Right cardiac atrium (tissue), 5 donors: ENCODE measurements at regions of chr16 and their contacts with region 1.

Region 1: GRCh38 chr16:89167425-89167941 is 4.1 kb upstream of the CDH15 start:
- DNase-seq: peak; percentile 86 to 95 (median 95)
- ATAC-seq: peak; percentile 57 to 72
- H3K4me3 ChIP-seq: no peak overlapping the region
- H3K27ac ChIP-seq: no peak overlapping the region
- H3K4me1 ChIP-seq: no peaks in the 10 kb centered on the region
- H3K27me3 ChIP-seq: no peaks in the 10 kb centered on the region

Region 2: DNA sequence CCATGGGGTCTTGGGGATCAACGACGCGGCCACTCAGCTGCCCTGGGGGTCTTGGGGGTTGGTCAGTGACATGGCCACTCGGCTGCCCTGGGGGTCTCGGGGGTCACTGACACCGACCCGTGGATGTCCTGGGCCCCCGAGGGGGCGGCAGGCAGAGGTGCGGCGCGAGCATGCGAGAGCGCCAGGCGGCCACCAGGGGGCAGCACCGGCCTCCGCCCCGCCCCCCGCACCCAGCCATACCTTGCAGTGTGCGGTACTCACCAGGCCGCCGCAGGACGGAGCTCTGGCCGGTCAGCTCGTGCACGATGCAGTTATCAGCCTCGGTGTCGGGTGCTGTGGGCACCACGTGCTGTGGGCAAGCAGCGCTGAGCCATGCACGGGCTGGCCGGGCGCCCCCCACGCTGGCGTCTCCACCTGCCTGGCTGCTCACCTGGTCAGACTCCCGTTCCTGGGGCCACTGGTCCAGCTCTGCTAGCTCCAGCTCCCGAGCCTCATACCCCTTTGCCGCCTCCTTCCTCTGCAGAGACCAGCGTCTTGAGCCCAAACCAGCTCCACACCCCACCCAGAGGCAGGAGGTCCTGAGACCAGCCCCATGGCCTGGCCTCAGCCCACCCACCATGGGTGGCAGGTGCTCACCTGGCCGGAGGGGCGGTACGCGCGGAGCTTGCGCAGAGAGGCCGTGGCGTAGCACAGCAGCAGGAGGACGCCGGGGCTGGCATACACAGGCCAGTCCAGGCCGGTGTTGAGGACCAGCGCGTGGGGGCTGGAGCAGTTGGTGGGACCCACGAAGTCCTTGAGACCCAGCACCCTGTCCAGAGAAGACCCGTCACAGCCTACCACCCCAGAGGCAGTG is 430.0 kb before region 1 on chr16:
- intact Hi-C with region 1: loop called in 3 of 4 experiments (anchors 5 to 10 kb)
- DNase-seq: peak; percentile 72 to 90 (median 89)
- ATAC-seq: peak; percentile 74
- H3K4me3 ChIP-seq: no peak overlapping the region
- H3K27ac ChIP-seq: no peak overlapping the region
- H3K4me1 ChIP-seq: no peaks in the 10 kb centered on the region
- H3K27me3 ChIP-seq: no peaks in the 10 kb centered on the region

Region 3: DNA sequence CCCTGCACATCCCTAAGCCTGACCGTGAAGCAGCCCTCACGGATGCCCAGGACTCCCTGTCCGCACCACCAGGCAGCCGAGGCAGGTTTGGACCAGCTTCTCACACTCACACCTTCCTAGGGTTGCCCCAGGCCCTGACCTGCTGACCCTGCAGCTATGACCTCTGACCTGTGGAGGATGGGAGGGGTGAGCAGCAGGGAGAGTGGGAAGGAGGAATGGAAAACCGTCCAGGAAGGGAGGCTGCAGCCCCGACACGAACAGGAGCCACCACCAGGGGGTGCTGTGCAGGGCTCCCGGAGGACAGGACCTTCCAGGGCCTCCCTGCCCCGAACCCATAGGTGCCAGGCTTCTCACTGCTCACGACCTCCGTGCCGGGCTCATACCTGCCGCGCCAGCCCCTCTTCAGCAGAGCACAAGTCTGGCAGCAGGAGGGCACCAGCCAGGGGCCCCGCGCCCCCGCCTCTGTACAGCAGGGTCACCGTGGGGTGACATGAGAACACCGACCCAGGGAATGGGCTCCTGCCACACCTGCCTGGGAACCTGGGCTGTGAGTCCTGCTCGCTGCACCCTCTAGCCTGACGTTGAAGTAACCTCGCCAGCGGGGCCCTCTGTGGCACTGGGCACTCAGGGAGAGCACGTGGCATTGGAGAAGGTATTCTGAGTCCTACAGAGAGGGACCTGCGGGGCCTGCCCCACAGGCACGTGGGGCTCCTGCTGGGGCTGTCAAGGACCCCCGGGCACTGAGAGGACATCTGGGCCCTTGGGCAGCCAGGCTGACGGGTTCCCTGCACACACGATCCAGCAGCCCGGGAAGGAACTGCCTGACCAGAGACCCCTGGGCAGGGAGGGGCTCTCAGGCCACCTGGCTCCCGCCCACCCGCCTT is 423.5 kb before region 1 on chr16:
- intact Hi-C with region 1: loop called in 3 of 4 experiments (anchors 5 to 10 kb)
- DNase-seq: peak; percentile 84 to 94 (median 93)
- ATAC-seq: peak; percentile 44 to 61
- H3K4me3 ChIP-seq: no peak overlapping the region
- H3K27ac ChIP-seq: no peak overlapping the region
- H3K4me1 ChIP-seq: no peaks in the 10 kb centered on the region
- H3K27me3 ChIP-seq: no peaks in the 10 kb centered on the region

Region 4: DNA sequence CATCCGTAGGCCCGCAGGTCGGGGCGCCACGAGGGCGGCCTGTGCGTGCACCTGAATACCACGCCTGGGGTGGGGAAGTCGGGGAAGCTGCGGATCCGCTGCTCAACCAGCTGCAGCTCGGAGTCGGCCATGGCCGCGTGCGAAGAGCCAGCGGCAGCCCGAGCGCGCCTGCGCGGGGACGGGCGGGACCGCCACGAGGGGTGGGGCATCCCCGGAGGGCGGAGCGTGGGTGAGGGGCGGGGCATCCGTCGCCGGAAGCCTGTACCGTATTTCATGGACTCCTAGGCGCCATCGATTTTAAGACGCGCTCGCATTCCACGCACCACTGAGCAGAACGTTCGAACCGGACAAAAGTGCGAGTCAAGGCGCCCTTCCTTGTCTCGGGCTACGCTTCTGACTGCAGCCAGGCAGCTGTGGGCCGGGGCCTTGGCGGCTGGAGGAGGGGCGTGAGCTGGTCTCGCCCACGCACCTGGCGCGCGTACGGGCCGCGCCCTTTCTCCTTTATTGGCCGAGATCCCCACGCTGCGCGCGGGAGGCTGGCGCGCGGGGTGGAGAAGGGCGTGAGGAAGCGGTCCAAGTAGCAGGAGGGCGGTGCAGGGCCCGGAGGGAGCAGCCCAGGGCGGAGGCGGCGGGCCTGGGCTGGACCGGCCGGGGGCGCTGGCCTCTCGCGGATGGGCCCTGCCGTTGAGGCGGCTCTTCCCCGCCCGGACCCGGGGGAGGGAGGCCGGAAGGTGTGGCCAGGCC is 355.5 kb before region 1 on chr16 and contains the start of gene APRT:
- intact Hi-C with region 1: loop called in 1 of 4 experiments (anchors 10 kb)
- DNase-seq: peak; percentile 94 to 99 (median 97)
- ATAC-seq: peak; percentile 91
- H3K4me3 ChIP-seq: peak within 1 kb of the TSS; percentile 62
- H3K27ac ChIP-seq: peak within 1 kb of the TSS; percentile 97
- H3K4me1 ChIP-seq: no peaks in the 10 kb centered on the region
- H3K27me3 ChIP-seq: no peaks in the 10 kb centered on the region
- total RNA-seq, gene APRT: 40.8 to 65.8 (median 50.7) TPM

Region 5: GRCh38 chr16:88941913-88942909 is 225.3 kb before region 1 on chr16:
- intact Hi-C with region 1: loop called in 1 of 4 experiments (anchors 5 kb)
- DNase-seq: peak; percentile 58 to 85 (median 76)
- ATAC-seq: peak in 1 of 2 donors; percentile 34
- H3K4me3 ChIP-seq: peak overlapping the region; percentile 80
- H3K27ac ChIP-seq: no peak overlapping the region
- H3K4me1 ChIP-seq: peaks cover 2% of the 10 kb centered on the region
- H3K27me3 ChIP-seq: no peaks in the 10 kb centered on the region